Mammary epithelial cell (primary cell): ENCODE measurements at regions of chr16 and their contacts with region 1.

Region 1: DNA sequence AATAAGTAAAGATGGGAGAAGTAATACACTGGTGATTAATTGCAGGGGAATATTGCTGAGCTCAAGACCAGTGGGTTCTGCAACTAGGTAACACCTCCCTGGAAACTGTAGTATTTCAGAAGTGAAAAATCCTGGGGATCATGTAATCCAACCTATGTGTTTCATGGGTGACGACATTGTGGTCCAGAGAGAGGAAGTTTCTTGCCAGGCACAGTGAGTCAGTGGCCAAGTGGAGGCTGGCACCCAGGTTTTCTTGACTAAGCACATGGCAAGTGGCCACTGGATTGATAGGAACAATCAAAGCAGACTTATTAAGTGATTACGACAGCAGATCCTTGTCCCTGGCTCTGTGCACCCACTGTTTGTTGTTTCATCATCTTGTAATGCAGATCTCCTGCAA is 14.6 kb upstream of the CIITA start:
- DNase-seq: peak; percentile 99
- H3K4me3 ChIP-seq: no peak overlapping the region
- H3K27ac ChIP-seq: no peak overlapping the region
- H3K4me1 ChIP-seq: peaks cover 22% of the 10 kb centered on the region
- H3K27me3 ChIP-seq: no peaks in the 10 kb centered on the region
- CTCF ChIP-seq: no peak

Region 2: DNA sequence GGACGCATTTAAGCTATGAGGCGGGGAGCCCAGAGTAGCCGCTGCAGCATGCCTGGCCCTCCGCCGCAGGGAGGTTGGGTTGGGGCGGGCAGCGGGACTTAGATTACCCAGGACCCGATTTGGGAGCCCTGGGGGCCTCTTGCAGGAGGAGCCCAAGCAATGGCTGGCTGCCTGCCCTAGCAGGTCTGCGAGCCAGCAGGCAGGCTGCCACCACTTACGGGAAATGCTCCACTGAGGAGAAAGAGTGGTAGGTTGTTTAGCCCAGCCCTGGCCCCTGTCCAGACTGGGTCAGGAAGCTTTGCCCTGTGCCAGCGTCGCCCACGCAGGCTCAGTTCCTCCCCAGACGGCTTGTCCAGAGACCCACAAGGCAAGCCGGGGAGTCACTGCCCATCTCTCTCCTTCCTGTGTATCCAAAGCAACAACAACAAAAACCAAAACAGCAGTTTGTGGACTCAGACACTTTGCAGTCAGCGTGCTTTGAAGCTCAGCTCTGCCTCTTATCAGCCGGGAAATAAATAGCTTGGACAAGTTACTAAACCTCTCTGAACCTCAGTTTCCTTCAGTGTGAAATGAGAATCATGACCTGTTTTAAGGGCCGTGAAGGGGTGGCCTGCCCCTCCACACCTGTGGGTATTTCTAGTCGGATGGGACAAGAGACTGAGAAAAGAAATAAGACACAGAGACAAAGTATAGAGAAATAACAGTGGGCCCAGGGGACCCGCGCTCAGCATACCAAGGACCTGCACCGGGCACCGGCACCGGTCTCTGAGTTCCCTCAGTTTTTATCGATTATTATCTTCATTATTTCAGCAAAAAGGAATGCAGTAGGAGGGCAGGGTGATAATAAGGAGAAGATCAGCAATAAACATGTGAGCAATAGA is 33.3 kb before region 1 on chr16:
- CTCF ChIA-PET with region 1: no interaction called
- dilution Hi-C with region 1: no loop called
- in situ Hi-C with region 1: no loop called
- intact Hi-C with region 1: loop called (anchors 2 kb)
- DNase-seq: peak; percentile 73
- H3K4me3 ChIP-seq: peak overlapping the region in 1 of 3 experiments; percentile 6
- H3K27ac ChIP-seq: peak overlapping the region; percentile 26
- H3K4me1 ChIP-seq: peaks cover 21% of the 10 kb centered on the region
- H3K27me3 ChIP-seq: no peaks in the 10 kb centered on the region
- CTCF ChIP-seq: no peak

Region 3: DNA sequence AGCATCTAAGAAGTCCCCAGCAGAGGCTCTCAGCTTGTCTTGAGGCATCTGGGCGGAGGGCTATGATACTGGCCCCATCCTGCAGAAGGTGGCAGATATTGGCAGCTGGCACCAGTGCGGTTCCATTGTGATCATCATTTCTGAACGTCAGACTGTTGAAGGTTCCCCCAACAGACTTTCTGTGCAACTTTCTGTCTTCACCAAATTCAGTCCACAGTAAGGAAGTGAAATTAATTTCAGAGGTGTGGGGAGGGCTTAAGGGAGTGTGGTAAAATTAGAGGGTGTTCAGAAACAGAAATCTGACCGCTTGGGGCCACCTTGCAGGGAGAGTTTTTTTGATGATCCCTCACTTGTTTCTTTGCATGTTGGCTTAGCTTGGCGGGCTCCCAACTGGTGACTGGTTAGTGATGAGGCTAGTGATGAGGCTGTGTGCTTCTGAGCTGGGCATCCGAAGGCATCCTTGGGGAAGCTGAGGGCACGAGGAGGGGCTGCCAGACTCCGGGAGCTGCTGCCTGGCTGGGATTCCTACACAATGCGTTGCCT is 14.4 kb after region 1 on chr16 and contains the start of gene CIITA:
- CTCF ChIA-PET with region 1: no interaction called
- dilution Hi-C with region 1: no loop called
- in situ Hi-C with region 1: no loop called
- intact Hi-C with region 1: loop called (anchors 1 kb)
- DNase-seq: peak; percentile 97
- H3K4me3 ChIP-seq: no peak within 1 kb of the TSS
- H3K27ac ChIP-seq: no peak within 1 kb of the TSS
- H3K4me1 ChIP-seq: peaks cover 21% of the 10 kb centered on the region
- H3K27me3 ChIP-seq: peaks cover 9% of the 10 kb centered on the region
- CTCF ChIP-seq: no peak
- total RNA-seq, gene CIITA: 0.17 to 0.35 TPM

Region 4: GRCh38 chr16:10950393-10950792 is 88.0 kb after region 1 on chr16:
- CTCF ChIA-PET with region 1: no interaction called
- dilution Hi-C with region 1: loop called (anchors 5 kb)
- in situ Hi-C with region 1: no loop called
- intact Hi-C with region 1: no loop called
- DNase-seq: peak; percentile 72
- H3K4me3 ChIP-seq: no peak overlapping the region
- H3K27ac ChIP-seq: peak overlapping the region; percentile 8
- H3K4me1 ChIP-seq: peaks cover 52% of the 10 kb centered on the region
- H3K27me3 ChIP-seq: no peaks in the 10 kb centered on the region
- CTCF ChIP-seq: no peak